ENCODE measurements at regions of chr1 and their contacts with region 1.

Region 1: GRCh38 chr1:202184750-202185460 is 8.7 kb upstream of the LGR6 start:
- DNase-seq: peak; percentile 89
- ATAC-seq: peak; percentile 81
- H3K4me3 ChIP-seq: no peak overlapping the region
- H3K27ac ChIP-seq: no peak overlapping the region
- H3K4me1 ChIP-seq: no peaks in the 10 kb centered on the region
- H3K27me3 ChIP-seq: no peaks in the 10 kb centered on the region
- CTCF ChIP-seq: peak; percentile 77

Region 2: DNA sequence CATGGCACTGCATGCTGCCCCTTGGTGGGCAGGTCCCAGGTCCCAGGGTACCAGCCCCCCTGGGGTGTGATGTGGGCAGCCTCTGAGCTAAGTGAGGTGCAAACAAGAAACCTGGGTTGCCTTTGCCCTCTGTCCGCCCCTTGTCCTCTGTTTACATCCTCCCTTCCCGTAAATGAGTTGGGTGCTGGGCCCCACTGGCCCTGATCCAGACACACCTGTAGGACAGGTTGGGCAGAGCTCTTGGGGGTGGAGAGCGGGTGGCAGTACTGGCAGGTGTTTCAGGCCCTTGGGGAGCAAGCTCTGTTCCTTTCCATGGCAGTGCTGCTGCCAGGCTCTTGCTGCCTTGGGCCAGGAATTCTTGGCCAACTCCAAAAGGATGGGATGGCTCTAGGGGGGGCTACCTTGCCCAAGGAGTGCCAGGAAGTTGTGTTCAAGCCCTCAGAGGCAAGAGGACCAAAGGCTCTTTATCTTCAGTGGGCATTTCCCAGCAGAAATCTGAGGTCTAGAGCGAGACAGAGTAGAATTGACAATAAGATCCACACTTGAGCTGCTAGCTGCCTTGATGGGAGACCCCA is 138.6 kb before region 1 on chr1:
- CTCF ChIA-PET with region 1: no interaction called
- POLR2A ChIA-PET with region 1: no interaction called
- intact Hi-C with region 1: no loop called
- DNase-seq: peak; percentile 84
- ATAC-seq: peak; percentile 58
- H3K4me3 ChIP-seq: peak overlapping the region; percentile 21; the same call in 1 of the 2 replicates
- H3K27ac ChIP-seq: peak overlapping the region; percentile 99
- H3K4me1 ChIP-seq: peaks cover 34% of the 10 kb centered on the region
- H3K27me3 ChIP-seq: no peaks in the 10 kb centered on the region
- CTCF ChIP-seq: no peak

Region 3: DNA sequence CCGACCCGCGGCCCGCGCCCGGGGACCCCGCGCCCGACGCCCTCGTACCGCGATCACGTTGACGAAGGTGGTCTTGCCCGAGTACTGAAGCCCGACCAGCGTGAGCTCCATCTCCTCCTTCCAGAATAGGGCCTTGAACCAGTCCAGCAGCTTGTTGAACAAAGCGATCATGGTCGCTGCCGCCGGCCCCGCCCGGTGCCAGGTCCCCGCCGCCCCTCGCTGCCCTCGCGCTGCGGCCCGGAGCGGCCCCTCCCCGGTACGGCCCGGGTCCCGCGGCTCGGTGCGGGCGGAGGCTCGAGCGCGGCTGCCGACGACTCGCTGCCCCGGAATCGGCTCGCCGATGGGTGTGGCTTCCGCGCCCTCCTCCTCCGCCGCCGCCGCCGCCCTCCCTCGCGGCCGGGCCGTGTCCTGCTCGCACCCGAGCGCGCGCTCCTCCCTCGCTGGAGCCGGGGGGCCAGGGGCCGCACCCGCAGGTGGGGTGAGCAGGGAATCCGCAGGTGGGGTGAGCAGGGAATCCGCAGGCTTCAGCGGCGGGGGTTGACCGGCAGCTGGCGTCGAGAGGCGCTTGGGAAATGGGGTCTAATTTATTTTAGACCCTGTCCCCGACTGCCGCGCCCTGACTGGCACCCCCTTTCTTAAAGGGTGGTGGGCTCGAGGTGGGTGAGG is 40.4 kb before region 1 on chr1 and contains the start of gene ARL8A:
- CTCF ChIA-PET with region 1: no interaction called
- POLR2A ChIA-PET with region 1: no interaction called
- intact Hi-C with region 1: no loop called
- DNase-seq: peak; percentile 49
- ATAC-seq: peak; percentile 81
- H3K4me3 ChIP-seq: peak within 1 kb of the TSS; percentile 84
- H3K27ac ChIP-seq: 0 out of 2 replicates have a peak within 1 kb of the TSS, but pooled peaks have one; percentile 3
- H3K4me1 ChIP-seq: peaks cover 14% of the 10 kb centered on the region; the same call in 1 of the 2 replicates
- H3K27me3 ChIP-seq: no peaks in the 10 kb centered on the region
- CTCF ChIP-seq: no peak
- total RNA-seq, gene ARL8A: 20.4 and 26.4 TPM in 2 replicates

Region 4: DNA sequence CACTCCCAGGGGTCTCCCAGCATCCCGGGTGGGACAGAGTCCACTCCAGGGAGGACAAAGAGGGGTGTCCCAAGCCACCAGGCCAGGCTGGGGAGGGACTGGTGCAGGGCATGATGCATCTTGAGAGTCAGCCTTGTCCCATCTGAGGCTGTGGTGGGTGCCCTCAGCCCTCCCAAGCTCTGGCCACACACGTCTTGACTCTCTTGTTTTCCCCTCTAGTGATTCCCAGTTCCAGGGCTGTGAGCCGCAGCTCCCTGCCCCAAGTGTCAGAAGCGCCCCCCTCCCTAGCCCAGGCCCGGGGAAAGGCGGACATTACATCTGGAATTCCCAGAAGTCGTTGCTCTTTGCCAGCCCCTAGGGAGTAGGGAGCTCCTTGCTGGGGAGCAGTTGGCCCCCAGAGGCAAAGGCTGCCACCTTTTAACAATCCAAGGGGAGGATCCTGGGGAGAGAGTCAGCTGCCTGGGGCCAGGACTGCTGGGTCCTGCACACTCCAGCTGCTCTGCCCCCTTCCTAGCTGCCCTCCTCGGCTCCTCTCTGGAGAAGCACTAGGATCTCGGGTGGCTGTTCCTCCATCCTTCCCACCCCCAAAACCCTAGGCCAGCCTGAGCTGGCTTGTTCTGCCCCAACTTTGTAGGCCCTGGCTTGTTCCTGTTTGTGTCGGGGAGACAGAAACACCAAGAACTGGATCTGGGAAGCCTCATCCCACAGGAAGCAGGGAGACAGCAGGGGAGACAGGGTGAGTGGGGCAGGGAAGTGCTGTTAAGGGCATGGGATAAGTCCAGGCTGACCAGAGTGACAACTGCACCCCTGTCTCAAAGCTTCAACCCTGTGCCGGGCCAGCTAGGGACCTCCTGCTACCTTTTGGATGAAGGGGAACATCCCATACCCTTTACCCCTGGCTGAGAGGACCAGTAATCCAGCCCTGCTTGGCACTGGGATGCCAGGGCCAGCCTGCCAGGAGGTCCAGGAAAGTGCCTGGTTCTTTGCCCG is 21.3 kb before region 1 on chr1:
- CTCF ChIA-PET with region 1: no interaction called
- POLR2A ChIA-PET with region 1: no interaction called
- intact Hi-C with region 1: no loop called
- DNase-seq: no peak
- ATAC-seq: no peak
- H3K4me3 ChIP-seq: no peak overlapping the region
- H3K27ac ChIP-seq: no peak overlapping the region
- H3K4me1 ChIP-seq: no peaks in the 10 kb centered on the region
- H3K27me3 ChIP-seq: no peaks in the 10 kb centered on the region
- CTCF ChIP-seq: no peak

Region 5: GRCh38 chr1:202235856-202236837 is 51.2 kb after region 1 on chr1:
- CTCF ChIA-PET with region 1: no interaction called
- POLR2A ChIA-PET with region 1: no interaction called
- intact Hi-C with region 1: loop called (anchors 2 kb)
- DNase-seq: peak; percentile 90
- ATAC-seq: peak; percentile 91
- H3K4me3 ChIP-seq: peak overlapping the region; percentile 55
- H3K27ac ChIP-seq: peak overlapping the region; percentile 69
- H3K4me1 ChIP-seq: peaks cover 18% of the 10 kb centered on the region
- H3K27me3 ChIP-seq: no peaks in the 10 kb centered on the region
- CTCF ChIP-seq: peak; percentile 78

Measured in PC-3 (cell line).